ENCODE measurements at regions of chr2 and their contacts with region 1.

Region 1: DNA sequence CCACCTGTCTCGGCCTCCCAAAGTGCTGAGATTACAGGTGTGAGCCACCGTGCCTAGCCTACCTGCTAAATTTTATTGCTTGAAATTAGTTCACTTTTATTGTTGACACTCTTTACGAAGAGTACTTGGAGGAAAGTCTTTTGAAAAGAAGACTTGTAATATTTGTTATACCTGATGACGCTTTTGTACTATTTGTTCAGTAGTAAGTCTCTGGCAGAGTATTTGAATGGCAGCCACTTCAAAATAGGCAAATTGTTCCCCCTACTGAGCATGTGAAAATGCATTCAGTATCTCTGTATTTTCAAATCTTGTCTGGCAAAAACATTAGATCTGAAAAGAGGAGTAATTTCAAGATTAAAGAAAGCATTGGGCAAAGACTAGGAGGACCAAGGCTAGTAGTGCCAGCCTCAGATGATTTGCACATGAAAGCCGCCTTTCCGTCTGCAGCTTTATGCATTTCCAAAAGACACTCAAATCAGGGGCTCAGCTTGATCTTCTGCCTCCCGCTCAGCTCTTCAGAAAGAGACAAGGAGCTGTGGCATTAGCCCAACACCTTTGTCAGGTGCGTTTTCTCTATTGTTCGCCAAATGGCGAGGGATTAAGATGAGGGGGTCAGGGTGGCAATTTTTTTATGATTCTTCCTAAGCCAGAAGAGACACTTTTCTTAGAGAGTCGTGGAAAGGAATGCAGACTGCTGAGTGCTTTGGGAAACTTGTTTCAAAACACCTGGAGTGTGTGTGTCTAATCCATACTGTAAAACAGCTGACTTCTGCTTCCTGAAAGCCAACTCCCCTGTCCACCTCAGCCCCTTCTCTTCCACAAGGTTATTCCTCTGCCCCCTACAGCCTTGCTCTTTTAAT is 18.8 kb upstream of the FOXI3 start:
- DNase-seq: no peak
- ATAC-seq: no peak
- H3K4me3 Mint-ChIP-seq: no peak overlapping the region
- H3K27ac Mint-ChIP-seq: no peak overlapping the region
- H3K4me1 Mint-ChIP-seq: no peaks in the 10 kb centered on the region
- H3K27me3 Mint-ChIP-seq: peaks cover 10% of the 10 kb centered on the region

Region 2: GRCh38 chr2:88489200-88489599 is 17.9 kb after region 1 on chr2:
- CTCF ChIA-PET with region 1: no interaction called
- POLR2A ChIA-PET with region 1: no interaction called
- intact Hi-C with region 1: loop called in 1 of 2 experiments (anchors 2 kb)
- DNase-seq: no peak
- ATAC-seq: no peak
- H3K4me3 Mint-ChIP-seq: no peak overlapping the region
- H3K27ac Mint-ChIP-seq: no peak overlapping the region
- H3K4me1 Mint-ChIP-seq: no peaks in the 10 kb centered on the region
- H3K27me3 Mint-ChIP-seq: peaks cover 5% of the 10 kb centered on the region

Measured in activated CD4-positive, alpha-beta T cell treated with anti-CD3 and anti-CD28 coated beads for 36 hours (primary cell).